Activated CD4-positive, alpha-beta T cell treated with anti-CD3 and anti-CD28 coated beads for 36 hours (primary cell): ENCODE measurements at regions of chr9 and their contacts with region 1.

Region 1: GRCh38 chr9:36450110-36450732 is 50.2 kb upstream of the RNF38 start:
- DNase-seq: peak; percentile 30
- ATAC-seq: no peak
- H3K4me3 Mint-ChIP-seq: no peak overlapping the region
- H3K27ac Mint-ChIP-seq: no peak overlapping the region
- H3K4me1 Mint-ChIP-seq: peaks cover 13% of the 10 kb centered on the region
- H3K27me3 Mint-ChIP-seq: no peaks in the 10 kb centered on the region

Region 2: DNA sequence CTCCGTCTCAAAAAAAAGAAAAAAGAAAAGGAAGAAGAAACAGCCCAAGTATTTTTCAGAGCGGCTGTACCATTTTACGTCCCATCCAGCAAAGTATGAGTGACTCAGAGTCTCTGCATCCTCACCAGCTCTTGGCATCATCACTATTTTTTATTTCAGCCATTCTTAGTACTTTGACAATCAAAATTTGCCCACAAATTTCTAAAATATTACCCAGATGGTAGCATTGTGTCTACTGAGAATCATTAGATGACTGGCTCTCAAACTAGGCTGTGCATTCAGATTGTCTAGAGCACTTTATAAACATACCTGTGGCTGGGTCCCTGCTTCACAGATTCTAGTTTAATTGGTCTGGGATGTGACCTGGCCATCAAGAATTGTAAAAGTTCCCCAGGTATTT is 100.9 kb after region 1 on chr9:
- CTCF ChIA-PET with region 1: interaction called, 12 read pairs
- POLR2A ChIA-PET with region 1: no interaction called
- intact Hi-C with region 1: loop called (anchors 1 to 5 kb)
- DNase-seq: no peak
- ATAC-seq: no peak
- H3K4me3 Mint-ChIP-seq: no peak overlapping the region
- H3K27ac Mint-ChIP-seq: no peak overlapping the region
- H3K4me1 Mint-ChIP-seq: no peaks in the 10 kb centered on the region
- H3K27me3 Mint-ChIP-seq: peaks cover 6% of the 10 kb centered on the region

Region 3: DNA sequence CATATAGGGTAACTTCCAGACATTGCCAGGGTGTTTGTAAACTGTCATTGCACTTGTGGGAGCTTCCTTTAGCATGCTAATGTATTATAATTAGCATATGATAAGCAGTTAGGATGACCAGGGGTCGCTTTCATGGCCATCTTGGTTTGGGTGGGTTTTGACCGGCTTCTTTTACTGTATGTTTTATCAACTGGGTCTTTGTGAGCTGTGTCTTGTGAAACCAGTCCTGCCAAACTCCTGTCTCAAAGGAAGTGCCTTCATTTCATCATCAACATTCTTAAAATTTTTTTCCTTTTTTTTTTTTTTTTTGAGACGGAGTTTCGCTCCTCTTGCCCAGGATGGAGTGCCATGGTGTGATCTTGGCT is 110.6 kb after region 1 on chr9:
- CTCF ChIA-PET with region 1: interaction called, 12 read pairs
- POLR2A ChIA-PET with region 1: no interaction called
- intact Hi-C with region 1: loop called in 1 of 2 experiments (anchors 5 kb)
- DNase-seq: no peak
- ATAC-seq: no peak
- H3K4me3 Mint-ChIP-seq: no peak overlapping the region
- H3K27ac Mint-ChIP-seq: no peak overlapping the region
- H3K4me1 Mint-ChIP-seq: no peaks in the 10 kb centered on the region
- H3K27me3 Mint-ChIP-seq: no peaks in the 10 kb centered on the region